ENCODE measurements at regions of chr3 and their contacts with region 1.

Region 1: GRCh38 chr3:151468284-151468917 is 7.5 kb upstream of the IGSF10 start:
- DNase-seq: no peak
- H3K4me3 ChIP-seq: no peak overlapping the region
- CTCF ChIP-seq: peak; percentile 77

Region 2: GRCh38 chr3:151445273-151446001 is 23.0 kb before region 1 on chr3:
- CTCF ChIA-PET with region 1: interaction called, 18 read pairs
- POLR2A ChIA-PET with region 1: no interaction called
- DNase-seq: peak; percentile 76
- H3K4me3 ChIP-seq: no peak overlapping the region
- CTCF ChIP-seq: no peak

Region 3: GRCh38 chr3:151452841-151453240 is 15.6 kb before region 1 on chr3:
- CTCF ChIA-PET with region 1: interaction called, 77 read pairs
- POLR2A ChIA-PET with region 1: no interaction called
- DNase-seq: no peak
- H3K4me3 ChIP-seq: no peak overlapping the region
- CTCF ChIP-seq: no peak